Naive thymus-derived CD4-positive, alpha-beta T cell (primary cell): ENCODE measurements at regions of chr15 and their contacts with region 1.

Region 1: DNA sequence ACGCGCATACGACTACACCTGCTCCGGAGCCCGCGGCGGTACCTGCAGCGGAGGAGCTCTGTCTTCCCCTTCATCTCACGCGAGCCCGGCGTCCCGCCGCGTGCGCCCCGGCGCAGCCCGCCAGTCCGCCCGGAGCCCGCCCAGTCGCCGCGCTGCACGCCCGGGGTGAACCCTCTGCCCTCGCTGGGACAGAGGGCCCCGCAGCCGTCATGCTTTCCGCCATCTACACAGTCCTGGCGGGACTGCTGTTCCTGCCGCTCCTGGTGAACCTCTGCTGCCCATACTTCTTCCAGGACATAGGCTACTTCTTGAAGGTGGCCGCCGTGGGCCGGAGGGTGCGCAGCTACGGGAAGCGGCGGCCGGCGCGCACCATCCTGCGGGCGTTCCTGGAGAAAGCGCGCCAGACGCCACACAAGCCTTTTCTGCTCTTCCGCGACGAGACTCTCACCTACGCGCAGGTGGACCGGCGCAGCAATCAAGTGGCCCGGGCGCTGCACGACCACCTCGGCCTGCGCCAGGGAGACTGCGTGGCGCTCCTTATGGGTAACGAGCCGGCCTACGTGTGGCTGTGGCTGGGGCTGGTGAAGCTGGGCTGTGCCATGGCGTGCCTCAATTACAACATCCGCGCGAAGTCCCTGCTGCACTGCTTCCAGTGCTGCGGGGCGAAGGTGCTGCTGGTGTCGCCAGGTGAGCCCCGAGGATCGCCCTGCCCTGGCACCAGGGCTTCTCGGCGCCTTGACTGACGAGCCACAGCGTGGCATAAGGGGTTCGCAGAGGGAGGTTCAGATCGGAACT is 420 bp downstream of the SLC27A2 start:
- DNase-seq: peak in 6 of 9 donors; percentile 13 to 65 (median 21)
- ATAC-seq: peak; percentile 56
- H3K4me3 ChIP-seq: peak overlapping the region; percentile 67
- H3K4me3 Mint-ChIP-seq: peak overlapping the region; percentile 82 to 98 (median 90)
- H3K27ac ChIP-seq: no peak overlapping the region
- H3K27ac Mint-ChIP-seq: peak overlapping the region in 3 of 9 donors; percentile 39 to 85 (median 54)
- H3K4me1 ChIP-seq: peaks cover 0 to 6% of the 10 kb centered on the region in 2 donors
- H3K4me1 Mint-ChIP-seq: peaks cover 7 to 56% (median 12%) of the 10 kb centered on the region in 7 donors
- H3K27me3 ChIP-seq: no peaks in the 10 kb centered on the region
- H3K27me3 Mint-ChIP-seq: peaks cover 0 to 53% (median 38%) of the 10 kb centered on the region in 5 donors

Region 2: DNA sequence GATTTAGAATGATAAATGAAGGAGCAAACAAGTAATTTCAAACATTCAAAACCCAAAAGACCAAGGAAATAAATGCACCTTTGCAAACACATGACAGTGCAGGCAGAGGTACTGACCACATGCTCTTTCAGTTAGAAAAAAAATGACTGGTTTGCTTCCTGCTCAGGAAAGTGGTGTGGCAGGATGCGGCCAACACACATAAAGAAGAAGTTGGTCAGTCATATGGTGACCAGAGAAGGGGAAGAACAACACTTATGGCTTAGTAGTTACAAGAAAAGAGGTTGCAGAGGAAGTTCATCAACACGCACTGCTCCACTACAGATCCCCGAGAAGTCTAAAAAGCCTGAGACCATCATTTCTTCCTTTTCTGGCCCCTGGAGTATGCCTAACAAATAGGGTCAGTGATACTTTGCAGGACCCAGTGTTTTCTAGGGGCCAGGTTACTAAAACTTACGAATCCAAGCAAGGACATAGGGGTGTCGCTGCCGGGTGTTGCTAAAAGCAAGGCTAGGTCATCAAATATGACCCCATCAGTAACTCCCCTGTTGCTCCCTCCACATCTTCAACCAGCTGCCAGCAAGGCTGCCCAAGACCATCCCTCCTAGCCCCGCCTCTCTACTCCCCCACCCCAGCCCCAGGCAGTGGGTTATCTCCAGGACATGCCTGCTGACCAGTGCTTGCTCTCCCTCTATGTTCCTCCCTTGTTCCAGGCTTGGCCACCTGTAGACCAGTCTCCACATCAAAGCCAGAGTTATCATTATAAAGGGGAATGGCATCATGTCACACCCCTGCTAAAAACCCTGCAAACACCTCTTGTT is 74.6 kb before region 1 on chr15:
- CTCF ChIA-PET with region 1: no interaction called
- POLR2A ChIA-PET with region 1: no interaction called
- intact Hi-C with region 1: loop called in 1 of 2 experiments (anchors 5 kb)
- DNase-seq: peak in 1 of 9 donors; percentile 42
- ATAC-seq: peak; percentile 90
- H3K4me3 ChIP-seq: no peak overlapping the region
- H3K4me3 Mint-ChIP-seq: peak overlapping the region in 2 of 10 donors; percentile 33 to 80
- H3K27ac ChIP-seq: no peak overlapping the region
- H3K27ac Mint-ChIP-seq: peak overlapping the region in 2 of 9 donors; percentile 15 to 96
- H3K4me1 ChIP-seq: peaks cover 4 to 19% of the 10 kb centered on the region in 2 donors
- H3K4me1 Mint-ChIP-seq: peaks cover 21 to 73% (median 35%) of the 10 kb centered on the region in 7 donors
- H3K27me3 ChIP-seq: no peaks in the 10 kb centered on the region
- H3K27me3 Mint-ChIP-seq: peaks cover 0 to 22% (median 0%) of the 10 kb centered on the region in 5 donors

Region 3: DNA sequence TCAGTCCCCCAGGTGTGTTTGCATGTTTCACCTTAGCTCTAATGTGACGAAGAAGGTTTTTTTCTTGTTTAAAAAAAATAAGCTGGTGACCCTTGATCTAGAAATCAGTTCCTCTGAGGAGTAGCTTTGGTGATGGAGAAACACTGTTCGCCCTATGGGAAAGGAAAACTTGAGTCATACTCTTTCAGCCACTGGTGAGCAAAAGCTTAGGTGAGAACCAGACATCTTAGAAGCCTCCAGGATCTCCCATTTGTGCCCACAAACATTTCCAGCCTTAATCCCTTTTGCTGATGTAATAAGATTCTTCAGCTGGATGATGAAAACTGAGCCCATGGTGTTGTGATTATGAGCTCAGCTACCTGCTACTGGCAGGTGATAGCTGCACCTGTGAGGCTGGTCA is 37.4 kb after region 1 on chr15:
- CTCF ChIA-PET with region 1: no interaction called
- POLR2A ChIA-PET with region 1: no interaction called
- intact Hi-C with region 1: no loop called
- DNase-seq: no peak
- ATAC-seq: no peak
- H3K4me3 ChIP-seq: no peak overlapping the region
- H3K4me3 Mint-ChIP-seq: no peak overlapping the region
- H3K27ac ChIP-seq: no peak overlapping the region
- H3K27ac Mint-ChIP-seq: no peak overlapping the region
- H3K4me1 ChIP-seq: no peaks in the 10 kb centered on the region
- H3K4me1 Mint-ChIP-seq: peaks cover 0 to 10% (median 0%) of the 10 kb centered on the region in 7 donors
- H3K27me3 ChIP-seq: no peaks in the 10 kb centered on the region
- H3K27me3 Mint-ChIP-seq: peaks cover 0 to 17% (median 0%) of the 10 kb centered on the region in 5 donors

Region 4: GRCh38 chr15:50247819-50248655 is 65.6 kb after region 1 on chr15:
- CTCF ChIA-PET with region 1: no interaction called
- POLR2A ChIA-PET with region 1: no interaction called
- intact Hi-C with region 1: loop called in 1 of 2 experiments (anchors 5 kb)
- DNase-seq: peak in 8 of 9 donors; percentile 18 to 62 (median 53)
- ATAC-seq: peak; percentile 93
- H3K4me3 ChIP-seq: peak overlapping the region; percentile 53
- H3K4me3 Mint-ChIP-seq: peak overlapping the region; percentile 55 to 88 (median 84)
- H3K27ac ChIP-seq: peak overlapping the region; percentile 53
- H3K27ac Mint-ChIP-seq: peak overlapping the region; percentile 89 to 99 (median 94)
- H3K4me1 ChIP-seq: peaks cover 8 to 12% of the 10 kb centered on the region in 2 donors
- H3K4me1 Mint-ChIP-seq: peaks cover 7 to 65% (median 22%) of the 10 kb centered on the region in 7 donors
- H3K27me3 ChIP-seq: no peaks in the 10 kb centered on the region
- H3K27me3 Mint-ChIP-seq: peaks cover 0 to 5% (median 0%) of the 10 kb centered on the region in 5 donors

Region 5: GRCh38 chr15:50261981-50262380 is 79.6 kb after region 1 on chr15:
- CTCF ChIA-PET with region 1: no interaction called
- POLR2A ChIA-PET with region 1: no interaction called
- intact Hi-C with region 1: loop called in 1 of 2 experiments (anchors 2 kb)
- DNase-seq: no peak
- ATAC-seq: no peak
- H3K4me3 ChIP-seq: no peak overlapping the region
- H3K4me3 Mint-ChIP-seq: peak overlapping the region in 1 of 10 donors; percentile 44
- H3K27ac ChIP-seq: no peak overlapping the region
- H3K27ac Mint-ChIP-seq: peak overlapping the region in 2 of 9 donors; percentile 14 to 94
- H3K4me1 ChIP-seq: peaks cover 7 to 27% of the 10 kb centered on the region in 2 donors
- H3K4me1 Mint-ChIP-seq: peaks cover 16 to 58% (median 32%) of the 10 kb centered on the region in 7 donors
- H3K27me3 ChIP-seq: no peaks in the 10 kb centered on the region
- H3K27me3 Mint-ChIP-seq: peaks cover 0 to 2% (median 0%) of the 10 kb centered on the region in 5 donors

Region 6: GRCh38 chr15:50315814-50316630 is 133.6 kb after region 1 on chr15:
- CTCF ChIA-PET with region 1: interaction called, 4 read pairs
- POLR2A ChIA-PET with region 1: no interaction called
- intact Hi-C with region 1: loop called (anchors 1 to 2 kb)
- DNase-seq: peak in 7 of 9 donors; percentile 8 to 47 (median 30)
- ATAC-seq: peak; percentile 66
- H3K4me3 ChIP-seq: no peak overlapping the region
- H3K4me3 Mint-ChIP-seq: no peak overlapping the region
- H3K27ac ChIP-seq: no peak overlapping the region
- H3K27ac Mint-ChIP-seq: no peak overlapping the region
- H3K4me1 ChIP-seq: peaks cover 0 to 6% of the 10 kb centered on the region in 2 donors
- H3K4me1 Mint-ChIP-seq: peaks cover 12 to 34% (median 21%) of the 10 kb centered on the region in 7 donors
- H3K27me3 ChIP-seq: no peaks in the 10 kb centered on the region
- H3K27me3 Mint-ChIP-seq: no peaks in the 10 kb centered on the region